Activated CD4-positive, alpha-beta memory T cell treated with anti-CD3 and anti-CD28 coated beads for 36 hours (primary cell): ENCODE measurements at regions of chr12 and their contacts with region 1.

Region 1: DNA sequence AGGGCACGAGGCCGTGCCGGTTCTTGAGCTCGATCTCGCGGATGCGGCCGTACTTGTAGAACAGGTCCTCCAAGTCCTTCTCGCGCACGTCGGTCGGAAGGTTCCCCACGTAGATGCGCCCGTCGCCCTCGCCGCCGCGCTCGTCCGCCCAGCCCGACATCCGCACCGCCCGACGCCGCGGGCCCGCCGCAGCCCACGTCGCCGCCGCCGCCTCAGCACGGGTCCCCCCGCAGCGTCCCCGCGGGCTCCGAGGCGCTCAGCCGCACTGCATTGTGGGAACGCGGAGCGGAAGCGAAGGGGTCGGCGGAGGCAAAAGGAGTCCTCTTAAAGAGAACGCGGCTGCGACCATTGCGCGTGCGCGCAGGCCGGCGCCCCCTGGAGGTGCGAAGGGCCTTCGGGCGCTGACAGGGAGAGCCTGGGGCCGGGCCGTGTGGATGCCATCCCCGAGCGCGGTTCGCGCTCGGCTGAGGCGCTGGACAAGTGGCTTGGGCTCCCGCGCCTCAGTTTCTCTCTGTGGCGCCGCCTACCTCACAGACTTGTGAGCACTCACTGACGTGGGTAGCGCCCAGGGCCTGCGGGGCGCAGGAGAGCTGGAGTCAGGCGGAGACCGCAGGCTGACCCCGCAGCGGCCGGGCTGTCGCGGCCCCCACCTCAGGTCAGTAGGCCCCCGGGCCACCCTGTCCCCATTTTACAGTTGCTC is at the start of gene SRSF9:
- DNase-seq: peak; percentile 98
- H3K4me3 Mint-ChIP-seq: peak within 1 kb of the TSS; percentile 94
- H3K27ac Mint-ChIP-seq: peak within 1 kb of the TSS; percentile 86
- H3K4me1 Mint-ChIP-seq: peaks cover 34% of the 10 kb centered on the region
- H3K27me3 Mint-ChIP-seq: no peaks in the 10 kb centered on the region
- total RNA-seq, gene SRSF9: 218 to 221 TPM

Region 2: DNA sequence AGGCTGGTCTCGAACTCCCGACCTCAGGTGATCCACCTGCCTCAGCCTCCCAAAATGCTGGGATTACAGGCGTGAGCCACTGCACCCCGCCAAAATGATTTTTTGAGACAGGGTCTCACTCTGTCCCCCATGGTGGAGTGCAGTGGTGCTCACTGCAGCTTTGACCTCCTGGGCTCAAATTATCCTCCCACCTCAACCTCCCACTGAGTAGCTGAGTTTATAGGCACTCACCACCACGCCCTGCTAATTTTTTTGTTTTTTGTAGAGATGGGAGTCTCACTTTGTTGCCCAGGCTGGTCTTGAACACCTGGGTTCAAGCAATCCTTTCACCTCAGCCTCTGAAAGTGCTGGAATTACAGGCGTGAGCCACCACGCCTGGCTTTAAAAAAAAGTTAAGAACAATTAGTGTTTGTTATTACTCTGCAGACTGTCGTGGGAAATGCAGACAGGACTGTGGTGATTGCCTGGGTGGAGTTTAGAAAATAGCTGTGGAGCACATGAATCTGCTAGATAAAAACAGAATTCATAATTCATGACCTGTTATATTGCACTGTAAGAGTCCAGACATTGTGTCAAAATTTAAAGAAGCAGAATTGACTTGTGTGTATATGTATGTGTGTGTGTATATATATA is 40.9 kb before region 1 on chr12:
- CTCF ChIA-PET with region 1: interaction called, 14 read pairs
- POLR2A ChIA-PET with region 1: interaction called, 5 read pairs
- intact Hi-C with region 1: no loop called
- DNase-seq: no peak
- H3K4me3 Mint-ChIP-seq: no peak overlapping the region
- H3K27ac Mint-ChIP-seq: no peak overlapping the region
- H3K4me1 Mint-ChIP-seq: peaks cover 6% of the 10 kb centered on the region
- H3K27me3 Mint-ChIP-seq: peaks cover 4% of the 10 kb centered on the region

Region 3: DNA sequence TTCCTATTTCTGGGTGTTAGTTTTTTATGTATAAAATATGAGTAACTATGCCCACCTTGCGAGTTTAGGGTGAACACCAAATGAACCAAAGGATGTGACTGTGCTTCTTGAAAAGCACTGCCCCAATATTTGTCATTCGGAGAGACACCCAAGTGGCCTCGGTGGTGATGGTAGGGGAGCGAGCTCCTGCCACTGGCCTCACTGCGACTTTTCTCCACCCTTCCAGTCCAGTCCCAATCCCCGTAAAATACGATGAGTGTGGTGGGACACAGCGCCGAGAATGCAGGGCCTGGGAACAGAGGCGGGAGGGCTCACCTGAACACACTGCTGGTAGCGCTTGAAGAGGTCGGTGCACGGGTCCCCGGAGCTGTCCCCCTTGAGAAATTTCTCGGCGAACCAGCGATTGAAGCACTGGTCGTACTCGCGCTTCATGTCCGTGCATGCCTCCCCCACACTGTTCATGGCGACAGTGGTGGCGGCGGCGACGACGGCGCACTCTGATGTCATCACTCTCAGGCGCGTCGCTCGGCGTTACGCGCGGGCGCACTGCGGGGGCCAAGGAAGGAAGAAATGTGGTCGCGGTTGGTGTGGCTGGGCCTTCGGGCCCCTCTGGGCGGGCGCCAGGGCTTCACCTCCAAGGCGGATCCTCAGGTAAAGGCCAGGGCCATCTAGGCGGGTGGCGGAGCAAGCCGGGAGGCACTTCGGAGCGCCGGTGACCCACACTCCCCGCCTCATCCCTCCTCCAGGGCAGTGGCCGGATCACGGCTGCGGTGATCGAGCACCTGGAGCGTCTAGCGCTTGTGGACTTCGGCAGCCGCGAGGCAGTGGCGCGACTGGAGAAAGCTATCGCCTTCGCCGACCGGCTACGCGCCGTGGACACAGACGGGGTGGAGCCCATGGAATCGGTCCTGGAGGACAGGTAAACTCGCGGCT is 23.4 kb before region 1 on chr12 and contains the starts of genes GATC and TRIAP1:
- CTCF ChIA-PET with region 1: interaction called, 97 read pairs
- POLR2A ChIA-PET with region 1: interaction called, 7 read pairs
- intact Hi-C with region 1: loop called (anchors 2 kb)
- DNase-seq: peak; percentile 94
- H3K4me3 Mint-ChIP-seq: peak within 1 kb of the TSS; percentile 93
- H3K27ac Mint-ChIP-seq: peak within 1 kb of the TSS; percentile 94
- H3K4me1 Mint-ChIP-seq: peaks cover 35% of the 10 kb centered on the region
- H3K27me3 Mint-ChIP-seq: peaks cover 1% of the 10 kb centered on the region
- total RNA-seq, gene GATC: 35.1 to 37.1 TPM
- total RNA-seq, gene TRIAP1: 32.2 to 34.6 TPM

Region 4: GRCh38 chr12:120495723-120496412 is 26.3 kb after region 1 on chr12 and contains the start of gene DYNLL1:
- CTCF ChIA-PET with region 1: interaction called, 11 read pairs
- POLR2A ChIA-PET with region 1: interaction called, 13 read pairs
- intact Hi-C with region 1: loop called (anchors 1 kb)
- DNase-seq: peak; percentile 98
- H3K4me3 Mint-ChIP-seq: peak within 1 kb of the TSS; percentile 86
- H3K27ac Mint-ChIP-seq: peak within 1 kb of the TSS; percentile 80
- H3K4me1 Mint-ChIP-seq: peaks cover 23% of the 10 kb centered on the region
- H3K27me3 Mint-ChIP-seq: no peaks in the 10 kb centered on the region
- total RNA-seq, gene DYNLL1: 176 to 184 TPM

Region 5: DNA sequence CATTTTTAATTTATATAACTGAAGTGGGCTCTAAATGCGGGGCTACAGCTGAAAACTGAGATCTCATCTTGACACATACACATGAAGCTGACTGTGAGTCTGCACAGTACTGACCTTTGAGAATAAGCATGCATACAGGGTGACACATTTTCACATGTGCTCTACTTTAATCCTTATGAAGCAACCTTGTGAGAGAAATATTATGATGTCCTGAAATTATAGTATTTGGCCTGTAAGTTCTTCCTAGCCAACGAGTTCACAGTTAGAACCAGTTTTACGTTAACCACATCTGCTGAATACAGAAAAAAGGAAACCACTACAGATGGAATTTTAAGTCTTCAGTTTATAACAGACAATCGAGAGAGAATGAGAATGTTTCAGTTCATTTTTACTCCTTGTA is 364.2 kb after region 1 on chr12:
- CTCF ChIA-PET with region 1: no interaction called
- POLR2A ChIA-PET with region 1: no interaction called
- intact Hi-C with region 1: no loop called
- DNase-seq: no peak
- H3K4me3 Mint-ChIP-seq: no peak overlapping the region
- H3K27ac Mint-ChIP-seq: no peak overlapping the region
- H3K4me1 Mint-ChIP-seq: peaks cover 67% of the 10 kb centered on the region
- H3K27me3 Mint-ChIP-seq: no peaks in the 10 kb centered on the region